IMR-90 (cell line): ENCODE measurements at regions of chr18 and their contacts with region 1.

Region 1: DNA sequence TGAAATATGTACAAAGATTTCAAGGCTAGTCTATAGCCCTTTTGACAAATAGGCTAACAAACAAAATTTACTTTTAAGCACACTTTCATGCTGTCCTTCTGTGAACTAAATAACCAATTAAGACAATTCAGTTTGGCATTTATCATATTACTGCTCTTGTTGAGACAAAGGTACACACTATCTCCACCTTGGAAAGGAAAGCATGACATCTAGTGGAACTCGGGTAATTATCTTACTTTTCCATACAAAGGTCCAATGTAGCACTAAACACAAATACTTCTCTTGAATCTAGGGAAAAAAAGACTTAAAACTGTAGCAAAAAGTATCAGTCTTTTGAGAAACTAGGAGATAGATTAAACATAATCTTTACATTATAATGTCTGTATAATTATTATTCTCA is 125.0 kb upstream of the CD226 start:
- DNase-seq: peak; percentile 50
- ATAC-seq: peak; percentile 39; the same call in 1 of the 2 replicates
- H3K4me3 ChIP-seq: no peak overlapping the region
- H3K27ac ChIP-seq: no peak overlapping the region
- H3K4me1 ChIP-seq: peaks cover 2% of the 10 kb centered on the region; the same call in 1 of the 2 replicates
- H3K27me3 ChIP-seq: no peaks in the 10 kb centered on the region
- CTCF ChIP-seq: peak; percentile 59
- POLR2A ChIP-seq: no peak
- RAD21 ChIP-seq: peak; percentile 74

Region 2: DNA sequence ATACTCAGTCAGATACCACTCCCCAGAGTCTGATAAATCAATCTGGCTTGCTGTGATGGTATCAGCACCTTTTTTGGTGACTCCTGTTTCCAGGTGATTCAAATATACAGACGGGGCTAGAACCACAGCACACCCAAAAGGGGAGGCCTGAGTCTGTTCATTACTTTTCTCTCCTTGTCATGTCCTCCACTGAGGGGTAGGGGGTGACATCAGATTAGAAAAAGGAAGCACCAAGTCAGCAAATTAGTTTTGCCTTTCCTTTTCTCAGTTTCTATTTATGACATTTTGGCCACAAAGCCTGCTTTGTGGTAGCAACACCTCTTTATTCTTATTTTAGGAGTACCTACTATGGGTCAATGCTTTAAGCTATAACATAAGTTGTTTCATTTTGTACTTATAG is 1147.4 kb before region 1 on chr18:
- CTCF ChIA-PET with region 1: no interaction called
- POLR2A ChIA-PET with region 1: no interaction called
- dilution Hi-C with region 1: no loop called
- in situ Hi-C with region 1: no loop called
- intact Hi-C with region 1: loop called (anchors 5 kb)
- DNase-seq: no peak
- ATAC-seq: no peak
- H3K4me3 ChIP-seq: no peak overlapping the region
- H3K27ac ChIP-seq: no peak overlapping the region
- H3K4me1 ChIP-seq: no peaks in the 10 kb centered on the region
- H3K27me3 ChIP-seq: no peaks in the 10 kb centered on the region; the same call in 1 of the 2 replicates
- CTCF ChIP-seq: peak; percentile 23; the same call in 1 of the 2 replicates
- POLR2A ChIP-seq: no peak
- RAD21 ChIP-seq: peak; percentile 33; the same call in 1 of the 2 replicates

Region 3: GRCh38 chr18:69636529-69637301 is 436.0 kb before region 1 on chr18:
- CTCF ChIA-PET with region 1: no interaction called
- POLR2A ChIA-PET with region 1: no interaction called
- dilution Hi-C with region 1: no loop called
- in situ Hi-C with region 1: no loop called
- intact Hi-C with region 1: loop called (anchors 5 kb)
- DNase-seq: no peak
- ATAC-seq: no peak
- H3K4me3 ChIP-seq: no peak overlapping the region
- H3K27ac ChIP-seq: no peak overlapping the region
- H3K4me1 ChIP-seq: peaks cover 4% of the 10 kb centered on the region; the same call in 1 of the 2 replicates
- H3K27me3 ChIP-seq: no peaks in the 10 kb centered on the region
- CTCF ChIP-seq: peak; percentile 33
- POLR2A ChIP-seq: no peak
- RAD21 ChIP-seq: peak; percentile 45

Region 4: GRCh38 chr18:69674292-69674877 is 398.3 kb before region 1 on chr18:
- CTCF ChIA-PET with region 1: no interaction called
- POLR2A ChIA-PET with region 1: no interaction called
- dilution Hi-C with region 1: no loop called
- in situ Hi-C with region 1: no loop called
- intact Hi-C with region 1: no loop called
- DNase-seq: peak; percentile 0
- ATAC-seq: peak; percentile 68
- H3K4me3 ChIP-seq: no peak overlapping the region
- H3K27ac ChIP-seq: no peak overlapping the region
- H3K4me1 ChIP-seq: no peaks in the 10 kb centered on the region
- H3K27me3 ChIP-seq: no peaks in the 10 kb centered on the region
- CTCF ChIP-seq: no peak
- POLR2A ChIP-seq: no peak
- RAD21 ChIP-seq: no peak

Region 5: DNA sequence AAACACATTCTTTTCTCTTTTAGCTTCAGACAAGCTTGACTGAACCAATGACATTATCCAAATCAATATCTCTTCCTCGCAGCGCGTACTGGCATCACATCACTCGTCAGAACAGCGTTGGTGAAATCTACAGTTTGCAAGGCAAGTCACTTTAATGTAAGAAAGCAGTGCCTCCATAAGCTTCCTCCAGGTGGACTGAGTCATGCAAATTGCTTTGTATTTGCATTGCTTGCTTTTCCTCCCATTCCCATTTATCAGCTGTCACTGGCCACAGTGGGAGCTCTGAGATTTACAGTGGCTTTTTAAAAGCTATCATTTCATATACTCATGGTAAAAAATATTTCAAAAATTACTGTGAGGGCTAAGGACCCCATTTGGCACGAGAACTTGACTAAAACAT is 314.9 kb before region 1 on chr18:
- CTCF ChIA-PET with region 1: no interaction called
- POLR2A ChIA-PET with region 1: no interaction called
- dilution Hi-C with region 1: no loop called
- in situ Hi-C with region 1: no loop called
- intact Hi-C with region 1: loop called (anchors 10 kb)
- DNase-seq: peak; percentile 66
- ATAC-seq: peak; percentile 38
- H3K4me3 ChIP-seq: no peak overlapping the region
- H3K27ac ChIP-seq: no peak overlapping the region
- H3K4me1 ChIP-seq: peaks cover 4% of the 10 kb centered on the region
- H3K27me3 ChIP-seq: no peaks in the 10 kb centered on the region
- CTCF ChIP-seq: no peak
- POLR2A ChIP-seq: no peak
- RAD21 ChIP-seq: no peak

Region 6: GRCh38 chr18:69845593-69846506 is 226.8 kb before region 1 on chr18:
- CTCF ChIA-PET with region 1: no interaction called
- POLR2A ChIA-PET with region 1: no interaction called
- dilution Hi-C with region 1: no loop called
- in situ Hi-C with region 1: no loop called
- intact Hi-C with region 1: loop called (anchors 10 kb)
- DNase-seq: peak; percentile 62
- ATAC-seq: peak; percentile 31
- H3K4me3 ChIP-seq: no peak overlapping the region
- H3K27ac ChIP-seq: peak overlapping the region; percentile 35; the same call in 1 of the 2 replicates
- H3K4me1 ChIP-seq: peaks cover 6% of the 10 kb centered on the region
- H3K27me3 ChIP-seq: no peaks in the 10 kb centered on the region
- CTCF ChIP-seq: no peak
- POLR2A ChIP-seq: no peak
- RAD21 ChIP-seq: no peak

Region 7: GRCh38 chr18:69943021-69943420 is 129.7 kb before region 1 on chr18:
- CTCF ChIA-PET with region 1: no interaction called
- POLR2A ChIA-PET with region 1: no interaction called
- dilution Hi-C with region 1: no loop called
- in situ Hi-C with region 1: no loop called
- intact Hi-C with region 1: no loop called
- DNase-seq: no peak
- ATAC-seq: no peak
- H3K4me3 ChIP-seq: no peak overlapping the region
- H3K27ac ChIP-seq: no peak overlapping the region
- H3K4me1 ChIP-seq: no peaks in the 10 kb centered on the region
- H3K27me3 ChIP-seq: no peaks in the 10 kb centered on the region
- CTCF ChIP-seq: 0 out of 2 replicates have a peak, but pooled peaks have one; percentile 18
- POLR2A ChIP-seq: no peak
- RAD21 ChIP-seq: no peak